Cardiac septum (tissue), 1 donor: ENCODE measurements at regions of chr12 and their contacts with region 1.

Region 1: DNA sequence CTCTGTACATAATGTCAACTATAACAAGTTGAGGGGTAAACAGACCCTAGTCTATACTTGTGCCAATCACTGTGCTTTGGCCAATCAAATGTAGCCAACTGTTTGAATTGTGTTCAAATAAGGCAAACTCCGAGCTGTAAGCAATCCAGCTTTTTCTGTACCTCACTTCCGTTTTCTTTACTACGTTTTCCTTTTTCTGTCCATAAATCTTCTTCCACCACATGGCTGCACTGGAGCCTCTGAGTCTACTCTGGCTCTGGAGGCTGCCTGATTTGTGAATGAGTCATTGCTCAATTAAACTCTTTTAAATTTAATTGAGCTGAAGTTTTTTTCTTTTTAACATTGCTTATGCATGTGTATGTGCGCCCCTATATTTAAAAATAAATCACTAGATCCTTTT is 29.7 kb downstream of the CLEC1A start:
- DNase-seq: no peak

Region 2: DNA sequence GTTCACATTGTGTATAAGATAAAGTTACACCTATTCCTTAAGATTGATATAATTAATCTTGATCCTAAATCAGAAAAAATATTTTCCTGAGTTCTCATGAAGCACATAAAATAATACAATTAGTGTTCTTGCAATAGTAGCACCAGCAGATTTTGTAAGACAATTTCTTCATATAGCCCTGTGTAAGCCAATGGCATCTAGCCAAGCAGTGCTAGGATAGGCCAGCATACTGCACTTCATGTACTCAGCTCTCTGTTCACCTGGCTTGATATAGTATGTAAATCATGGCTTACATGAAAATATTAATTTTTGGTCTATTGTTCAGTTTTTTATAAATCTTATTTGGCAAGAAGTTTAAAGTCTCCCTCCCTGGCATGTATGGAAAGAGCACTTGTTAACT is 185.9 kb before region 1 on chr12:
- intact Hi-C with region 1: no loop called
- DNase-seq: no peak

Region 3: GRCh38 chr12:10094646-10095395 is 25.7 kb after region 1 on chr12:
- intact Hi-C with region 1: loop called (anchors 2 kb)
- DNase-seq: no peak

Region 4: GRCh38 chr12:10301103-10301502 is 232.0 kb after region 1 on chr12:
- intact Hi-C with region 1: no loop called
- DNase-seq: no peak